ENCODE measurements at regions of chr12 and their contacts with region 1.

Region 1: GRCh38 chr12:111819191-111820150 is 22.6 kb upstream of the MAPKAPK5 start:
- DNase-seq: peak; percentile 41 to 54
- H3K4me3 ChIP-seq: no peak overlapping the region
- H3K4me3 Mint-ChIP-seq: peak overlapping the region; percentile 8
- H3K27ac Mint-ChIP-seq: peak overlapping the region; percentile 8
- H3K4me1 ChIP-seq: peaks cover 36% of the 10 kb centered on the region
- H3K4me1 Mint-ChIP-seq: peaks cover 14% of the 10 kb centered on the region
- H3K27me3 ChIP-seq: no peaks in the 10 kb centered on the region
- H3K27me3 Mint-ChIP-seq: no peaks in the 10 kb centered on the region
- CTCF ChIP-seq: no peak

Region 2: DNA sequence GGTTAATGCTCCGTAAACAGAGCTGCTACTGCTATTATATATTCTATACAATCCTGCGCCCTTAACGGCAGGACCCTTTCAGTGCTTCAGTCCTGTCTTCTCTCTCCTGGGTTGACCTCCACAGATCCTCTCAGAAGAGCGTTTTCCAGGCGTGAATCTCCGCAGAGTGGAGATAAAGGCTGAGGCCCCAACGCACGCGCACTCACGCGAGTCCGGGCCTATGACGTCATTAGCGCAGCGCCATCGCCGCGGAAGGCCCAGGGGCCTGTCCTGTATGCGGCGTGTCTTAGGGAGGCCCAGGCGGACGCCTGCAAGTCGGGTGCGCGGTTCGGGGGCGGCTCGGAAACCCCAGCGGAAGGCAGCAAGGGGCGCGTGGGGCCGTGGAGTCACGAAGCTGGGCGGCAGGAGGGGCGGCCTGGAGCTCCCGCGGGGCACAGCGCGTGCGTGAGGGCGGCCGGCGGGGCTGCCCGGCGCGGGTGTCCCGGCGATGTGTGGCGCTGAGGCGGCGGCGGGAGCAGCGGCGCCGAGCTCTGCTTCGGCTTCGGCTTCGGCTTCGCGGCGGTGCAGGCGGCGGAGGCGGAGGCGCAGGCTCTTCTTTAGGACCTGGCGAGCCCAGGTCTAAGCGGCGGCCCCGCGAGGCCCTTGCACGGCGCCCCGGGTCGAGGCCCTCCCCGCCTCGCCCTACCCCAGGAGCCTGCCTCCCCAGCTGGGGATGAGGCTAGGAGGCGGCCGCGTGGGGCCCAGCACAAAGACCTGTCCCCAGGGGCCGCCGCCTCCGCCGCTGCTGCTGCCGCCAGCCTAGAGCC is 22.5 kb after region 1 on chr12 and contains the start of gene MAPKAPK5:
- CTCF ChIA-PET with region 1: interaction called, 3 read pairs
- POLR2A ChIA-PET with region 1: interaction called, 3 read pairs
- intact Hi-C with region 1: loop called (anchors 2 kb)
- DNase-seq: peak; percentile 96 to 97
- H3K4me3 ChIP-seq: peak within 1 kb of the TSS; percentile 99
- H3K4me3 Mint-ChIP-seq: peak within 1 kb of the TSS; percentile 88
- H3K27ac Mint-ChIP-seq: peak within 1 kb of the TSS; percentile 99
- H3K4me1 ChIP-seq: peaks cover 10% of the 10 kb centered on the region; the same call in 1 of the 2 replicates
- H3K4me1 Mint-ChIP-seq: peaks cover 20% of the 10 kb centered on the region
- H3K27me3 ChIP-seq: no peaks in the 10 kb centered on the region
- H3K27me3 Mint-ChIP-seq: no peaks in the 10 kb centered on the region
- CTCF ChIP-seq: no peak
- total RNA-seq, gene MAPKAPK5: 89.5 and 90.1 TPM in 2 replicates

Region 3: GRCh38 chr12:111868676-111869588 is 49.5 kb after region 1 on chr12:
- CTCF ChIA-PET with region 1: no interaction called
- POLR2A ChIA-PET with region 1: no interaction called
- intact Hi-C with region 1: no loop called
- DNase-seq: no peak
- H3K4me3 ChIP-seq: no peak overlapping the region
- H3K4me3 Mint-ChIP-seq: no peak overlapping the region
- H3K27ac Mint-ChIP-seq: no peak overlapping the region
- H3K4me1 ChIP-seq: no peaks in the 10 kb centered on the region
- H3K4me1 Mint-ChIP-seq: no peaks in the 10 kb centered on the region
- H3K27me3 ChIP-seq: no peaks in the 10 kb centered on the region
- H3K27me3 Mint-ChIP-seq: no peaks in the 10 kb centered on the region
- CTCF ChIP-seq: no peak

Region 4: GRCh38 chr12:111942557-111942956 is 123.1 kb after region 1 on chr12:
- CTCF ChIA-PET with region 1: no interaction called
- POLR2A ChIA-PET with region 1: no interaction called
- intact Hi-C with region 1: loop called (anchors 5 kb)
- DNase-seq: no peak
- H3K4me3 ChIP-seq: no peak overlapping the region
- H3K4me3 Mint-ChIP-seq: no peak overlapping the region
- H3K27ac Mint-ChIP-seq: no peak overlapping the region
- H3K4me1 ChIP-seq: no peaks in the 10 kb centered on the region
- H3K4me1 Mint-ChIP-seq: no peaks in the 10 kb centered on the region
- H3K27me3 ChIP-seq: no peaks in the 10 kb centered on the region
- H3K27me3 Mint-ChIP-seq: no peaks in the 10 kb centered on the region
- CTCF ChIP-seq: no peak

Region 5: GRCh38 chr12:112012775-112013600 is 193.5 kb after region 1 on chr12 and contains the starts of genes ERP29 and TMEM116:
- CTCF ChIA-PET with region 1: interaction called, 5 read pairs
- POLR2A ChIA-PET with region 1: no interaction called
- intact Hi-C with region 1: loop called (anchors 5 kb)
- DNase-seq: peak; percentile 98 to 99
- H3K4me3 ChIP-seq: peak within 1 kb of the TSS; percentile 90
- H3K4me3 Mint-ChIP-seq: peak within 1 kb of the TSS; percentile 90
- H3K27ac Mint-ChIP-seq: peak within 1 kb of the TSS; percentile 91
- H3K4me1 ChIP-seq: peaks cover 7% of the 10 kb centered on the region; the same call in 1 of the 2 replicates
- H3K4me1 Mint-ChIP-seq: peaks cover 20% of the 10 kb centered on the region
- H3K27me3 ChIP-seq: no peaks in the 10 kb centered on the region
- H3K27me3 Mint-ChIP-seq: no peaks in the 10 kb centered on the region
- CTCF ChIP-seq: peak; percentile 51 to 71
- total RNA-seq, gene ERP29: 226 and 231 TPM in 2 replicates
- total RNA-seq, gene TMEM116: 10.3 and 11.0 TPM in 2 replicates